ENCODE measurements at regions of chr20 and their contacts with region 1.

Region 1: GRCh38 chr20:3000852-3001523 is 42.4 kb upstream of the GNRH2 start:
- DNase-seq: no peak
- ATAC-seq: peak; percentile 66
- H3K4me3 Mint-ChIP-seq: no peak overlapping the region
- H3K27ac Mint-ChIP-seq: no peak overlapping the region
- H3K4me1 Mint-ChIP-seq: no peaks in the 10 kb centered on the region
- H3K27me3 Mint-ChIP-seq: no peaks in the 10 kb centered on the region
- CTCF ChIP-seq: no peak

Region 2: DNA sequence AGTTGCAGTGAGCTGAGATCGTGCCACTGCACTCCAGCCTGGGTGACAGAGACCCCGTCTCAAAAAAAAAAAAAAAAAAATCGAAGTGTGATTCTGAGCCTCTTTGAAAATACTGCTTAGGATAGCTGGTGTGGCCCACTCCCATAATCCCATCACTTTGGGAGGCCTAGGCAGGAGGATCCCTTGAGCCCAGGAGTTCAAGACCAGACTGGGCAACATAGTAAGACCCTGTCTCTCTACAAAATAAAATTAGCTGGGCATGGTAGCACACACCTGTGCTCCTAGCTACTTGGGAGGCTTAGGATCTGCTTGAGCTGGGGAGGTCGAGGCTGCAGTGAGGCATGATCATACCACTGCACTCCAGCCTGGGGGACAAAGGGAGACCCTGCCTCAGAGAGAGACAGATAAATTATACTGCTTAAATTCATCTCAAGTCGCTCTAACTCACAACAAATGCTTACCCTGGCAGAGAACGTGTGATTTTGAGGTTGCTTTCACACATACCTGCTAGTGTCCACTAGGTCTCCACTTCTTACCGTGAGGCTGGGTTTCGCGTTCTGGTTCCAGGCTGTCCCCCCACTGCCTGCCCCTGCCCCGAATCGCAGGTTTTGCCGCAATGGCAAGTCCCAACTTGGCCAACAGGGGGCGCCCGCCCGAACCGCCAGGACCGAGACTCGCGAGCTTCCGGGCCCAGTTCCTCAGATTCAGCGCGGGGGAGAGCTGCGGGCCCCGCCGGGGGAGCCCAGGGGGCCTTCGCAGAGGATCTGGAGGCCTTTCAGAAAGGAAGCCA is 476.9 kb before region 1 on chr20:
- CTCF ChIA-PET with region 1: interaction called, 3 read pairs
- POLR2A ChIA-PET with region 1: interaction called, 9 read pairs
- intact Hi-C with region 1: loop called (anchors 1 kb)
- DNase-seq: peak; percentile 91
- ATAC-seq: peak; percentile 80
- H3K4me3 Mint-ChIP-seq: peak overlapping the region; percentile 90
- H3K27ac Mint-ChIP-seq: peak overlapping the region; percentile 75
- H3K4me1 Mint-ChIP-seq: peaks cover 15% of the 10 kb centered on the region
- H3K27me3 Mint-ChIP-seq: peaks cover 4% of the 10 kb centered on the region
- CTCF ChIP-seq: peak; percentile 81

Region 3: GRCh38 chr20:2713285-2713684 is 287.7 kb before region 1 on chr20:
- CTCF ChIA-PET with region 1: interaction called, 4 read pairs
- POLR2A ChIA-PET with region 1: no interaction called
- intact Hi-C with region 1: loop called (anchors 1 kb)
- DNase-seq: no peak
- ATAC-seq: no peak
- H3K4me3 Mint-ChIP-seq: no peak overlapping the region
- H3K27ac Mint-ChIP-seq: no peak overlapping the region
- H3K4me1 Mint-ChIP-seq: no peaks in the 10 kb centered on the region
- H3K27me3 Mint-ChIP-seq: peaks cover 9% of the 10 kb centered on the region
- CTCF ChIP-seq: no peak

Region 4: GRCh38 chr20:2742934-2743559 is 257.9 kb before region 1 on chr20:
- CTCF ChIA-PET with region 1: interaction called, 3 read pairs
- POLR2A ChIA-PET with region 1: no interaction called
- intact Hi-C with region 1: loop called (anchors 1 kb)
- DNase-seq: peak; percentile 43
- ATAC-seq: peak; percentile 90
- H3K4me3 Mint-ChIP-seq: no peak overlapping the region
- H3K27ac Mint-ChIP-seq: no peak overlapping the region
- H3K4me1 Mint-ChIP-seq: peaks cover 3% of the 10 kb centered on the region
- H3K27me3 Mint-ChIP-seq: peaks cover 25% of the 10 kb centered on the region
- CTCF ChIP-seq: no peak

Region 5: DNA sequence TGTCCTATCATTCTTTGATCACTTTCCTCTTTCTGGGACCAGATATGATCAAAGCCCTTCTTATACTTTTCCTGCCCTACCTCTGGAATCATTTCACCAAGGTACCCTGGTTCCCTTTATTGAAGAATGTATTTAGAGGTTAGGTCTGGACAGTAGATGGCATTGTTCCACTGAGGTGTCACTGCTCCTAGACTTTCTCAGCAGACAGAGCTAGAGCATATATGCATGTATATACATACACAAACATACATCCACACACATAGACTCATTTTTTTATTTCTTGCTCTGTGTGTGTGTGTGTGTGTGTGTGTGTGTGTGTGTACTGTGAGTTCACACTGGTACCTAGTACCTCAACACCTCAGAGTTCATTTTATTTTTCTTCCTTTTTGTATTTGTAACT is 86.8 kb before region 1 on chr20:
- CTCF ChIA-PET with region 1: no interaction called
- POLR2A ChIA-PET with region 1: no interaction called
- intact Hi-C with region 1: loop called (anchors 1 kb)
- DNase-seq: no peak
- ATAC-seq: no peak
- H3K4me3 Mint-ChIP-seq: no peak overlapping the region
- H3K27ac Mint-ChIP-seq: no peak overlapping the region
- H3K4me1 Mint-ChIP-seq: peaks cover 4% of the 10 kb centered on the region
- H3K27me3 Mint-ChIP-seq: no peaks in the 10 kb centered on the region
- CTCF ChIP-seq: no peak

Region 6: DNA sequence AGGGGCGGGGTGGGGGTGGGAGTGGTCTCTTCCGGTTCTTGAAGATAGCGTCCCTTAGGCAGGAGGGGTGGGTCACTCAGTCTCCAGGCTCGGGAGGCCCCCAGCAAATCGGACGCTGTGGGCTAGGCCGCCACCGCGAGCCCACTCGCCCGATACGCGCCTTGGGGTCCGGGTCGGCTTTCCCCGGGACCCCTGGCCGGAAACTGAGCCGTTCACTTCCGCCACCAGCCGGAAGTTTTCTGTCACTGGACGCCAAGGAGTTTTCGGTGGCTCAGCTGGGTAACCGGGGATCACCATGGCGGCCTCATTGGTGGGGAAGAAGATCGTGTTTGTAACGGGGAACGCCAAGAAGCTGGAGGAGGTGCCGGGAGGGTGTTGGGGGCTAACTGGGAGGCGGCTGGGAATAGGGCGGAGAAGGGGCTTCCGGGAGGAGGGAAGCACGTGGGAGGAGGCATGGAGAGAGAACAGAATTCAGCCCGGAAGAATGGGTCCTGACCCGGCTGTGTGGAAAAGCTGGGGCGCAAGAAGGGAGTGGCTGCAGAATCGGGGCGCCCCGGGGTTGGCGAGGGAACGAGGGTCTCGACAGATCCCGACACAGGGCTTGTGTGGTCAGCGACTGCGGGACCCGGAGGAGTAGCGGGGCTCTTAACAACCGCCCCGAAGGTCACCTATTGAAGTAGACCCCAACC is 208.4 kb after region 1 on chr20 and contains the start of gene ITPA:
- CTCF ChIA-PET with region 1: no interaction called
- POLR2A ChIA-PET with region 1: interaction called, 10 read pairs
- intact Hi-C with region 1: no loop called
- DNase-seq: peak; percentile 58
- ATAC-seq: peak; percentile 47
- H3K4me3 Mint-ChIP-seq: peak within 1 kb of the TSS; percentile 98
- H3K27ac Mint-ChIP-seq: peak within 1 kb of the TSS; percentile 86
- H3K4me1 Mint-ChIP-seq: peaks cover 29% of the 10 kb centered on the region
- H3K27me3 Mint-ChIP-seq: no peaks in the 10 kb centered on the region
- CTCF ChIP-seq: no peak
- total RNA-seq, gene ITPA: 82.1 and 84.8 TPM in 2 replicates